HCT116 (cell line): ENCODE measurements at regions of chr1 and their contacts with region 1.

Region 1: GRCh38 chr1:12031039-12031980 is 12.0 kb downstream of the MIIP start:
- DNase-seq: no peak
- ATAC-seq: peak; percentile 95
- H3K4me3 ChIP-seq: no peak overlapping the region
- H3K27ac ChIP-seq: no peak overlapping the region
- H3K4me1 ChIP-seq: no peaks in the 10 kb centered on the region
- H3K27me3 ChIP-seq: no peaks in the 10 kb centered on the region
- CTCF ChIP-seq: peak; percentile 51 to 81 (median 73); a peak in 5 of 6 replicates
- POLR2A ChIP-seq: no peak
- RAD21 ChIP-seq: peak; percentile 82

Region 2: DNA sequence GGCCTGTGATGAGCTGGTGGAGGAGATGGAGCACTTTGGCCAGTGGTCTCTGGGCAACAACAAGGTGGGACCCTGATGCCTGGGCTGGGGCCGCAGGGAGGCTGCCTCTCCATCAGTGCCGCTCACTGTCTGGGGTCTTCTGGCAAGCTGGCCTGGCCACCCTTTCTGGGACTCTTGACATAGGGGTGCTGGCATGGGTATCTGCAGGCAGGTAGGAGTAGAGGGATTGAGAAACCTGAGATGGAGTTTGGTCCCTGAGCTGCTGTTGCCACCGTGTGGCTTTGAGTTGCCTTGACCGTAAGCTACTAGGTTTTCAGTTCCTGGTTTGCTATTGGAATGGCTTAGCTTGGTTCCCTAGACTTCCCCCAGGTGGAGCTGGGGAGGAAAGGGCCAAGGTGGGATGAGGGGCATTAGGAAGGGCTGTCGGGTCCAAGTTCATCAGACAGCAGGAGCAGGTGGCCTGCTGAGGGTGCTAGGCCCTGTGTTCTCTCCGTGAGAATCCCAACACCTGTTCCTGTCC is 64.2 kb before region 1 on chr1:
- CTCF ChIA-PET with region 1: interaction called, 3 read pairs
- POLR2A ChIA-PET with region 1: no interaction called
- RAD21 ChIA-PET with region 1: no interaction called
- intact Hi-C with region 1: loop called (anchors 5 kb)
- DNase-seq: peak; percentile 54
- ATAC-seq: peak; percentile 87
- H3K4me3 ChIP-seq: no peak overlapping the region
- H3K27ac ChIP-seq: no peak overlapping the region; the same call in 1 of the 2 replicates
- H3K4me1 ChIP-seq: no peaks in the 10 kb centered on the region
- H3K27me3 ChIP-seq: no peaks in the 10 kb centered on the region
- CTCF ChIP-seq: peak; percentile 52 to 59 (median 53); a peak in 5 of 6 replicates
- POLR2A ChIP-seq: no peak
- RAD21 ChIP-seq: peak; percentile 68

Region 3: GRCh38 chr1:12019858-12020509 is 11.3 kb before region 1 on chr1:
- CTCF ChIA-PET with region 1: interaction called, 10 read pairs
- POLR2A ChIA-PET with region 1: interaction called, 4 read pairs
- RAD21 ChIA-PET with region 1: no interaction called
- intact Hi-C with region 1: no loop called
- DNase-seq: no peak
- ATAC-seq: peak; percentile 19
- H3K4me3 ChIP-seq: peak overlapping the region; percentile 91 to 95
- H3K27ac ChIP-seq: peak overlapping the region; percentile 73
- H3K4me1 ChIP-seq: peaks cover 0 to 17% of the 10 kb centered on the region in 2 experiments; a peak in 2 of 4 replicates
- H3K27me3 ChIP-seq: no peaks in the 10 kb centered on the region
- CTCF ChIP-seq: no peak
- POLR2A ChIP-seq: no peak
- RAD21 ChIP-seq: no peak